ENCODE measurements at regions of chr11 and their contacts with region 1.

Region 1: GRCh38 chr11:62217191-62217748 is 8.8 kb downstream of the SCGB2A1 start:
- DNase-seq: no peak
- H3K4me3 Mint-ChIP-seq: no peak overlapping the region
- H3K27ac Mint-ChIP-seq: no peak overlapping the region
- H3K4me1 Mint-ChIP-seq: no peaks in the 10 kb centered on the region
- H3K27me3 Mint-ChIP-seq: peaks cover 8% of the 10 kb centered on the region

Region 2: DNA sequence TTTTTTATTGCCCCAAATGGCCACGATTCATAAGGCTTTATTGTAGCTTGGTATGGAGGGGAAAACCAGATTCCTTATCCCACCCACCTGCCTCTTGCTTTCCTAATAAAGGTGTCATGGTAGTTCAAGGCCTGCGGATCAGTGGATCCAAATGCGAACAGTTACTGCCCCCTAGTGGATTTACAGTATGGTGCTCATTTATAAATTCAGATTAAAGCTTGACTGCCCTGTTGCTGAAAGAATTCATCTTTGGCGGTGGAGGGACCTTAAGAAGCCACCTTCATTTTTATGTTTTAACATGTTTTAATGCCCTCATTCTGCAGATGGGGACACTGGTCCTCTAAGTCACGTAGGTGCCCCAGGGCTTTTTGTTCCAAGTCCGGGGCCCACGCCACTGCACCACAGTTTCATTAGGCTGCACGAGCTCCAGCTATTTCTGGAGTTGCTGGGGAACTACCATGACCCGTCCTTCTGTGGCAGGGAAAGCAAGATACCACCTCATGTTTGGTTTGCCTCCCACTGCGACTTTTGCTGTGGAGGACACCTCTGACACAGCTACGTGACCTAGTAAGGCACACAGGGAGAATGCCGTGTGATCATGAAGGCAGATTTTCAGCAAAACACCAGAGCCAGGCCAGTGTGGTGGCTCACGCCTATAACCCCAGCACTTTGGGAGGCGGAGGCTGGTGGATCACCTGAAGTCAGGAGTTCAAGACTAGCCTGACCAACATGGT is 109.1 kb before region 1 on chr11:
- intact Hi-C with region 1: no loop called
- DNase-seq: peak; percentile 12
- H3K4me3 Mint-ChIP-seq: no peak overlapping the region
- H3K27ac Mint-ChIP-seq: no peak overlapping the region
- H3K4me1 Mint-ChIP-seq: peaks cover 13% of the 10 kb centered on the region
- H3K27me3 Mint-ChIP-seq: peaks cover 4% of the 10 kb centered on the region

Region 3: GRCh38 chr11:62315431-62315830 is 98.2 kb after region 1 on chr11:
- intact Hi-C with region 1: loop called (anchors 1 kb)
- DNase-seq: no peak
- H3K4me3 Mint-ChIP-seq: no peak overlapping the region
- H3K27ac Mint-ChIP-seq: no peak overlapping the region
- H3K4me1 Mint-ChIP-seq: peaks cover 5% of the 10 kb centered on the region
- H3K27me3 Mint-ChIP-seq: peaks cover 16% of the 10 kb centered on the region

Region 4: DNA sequence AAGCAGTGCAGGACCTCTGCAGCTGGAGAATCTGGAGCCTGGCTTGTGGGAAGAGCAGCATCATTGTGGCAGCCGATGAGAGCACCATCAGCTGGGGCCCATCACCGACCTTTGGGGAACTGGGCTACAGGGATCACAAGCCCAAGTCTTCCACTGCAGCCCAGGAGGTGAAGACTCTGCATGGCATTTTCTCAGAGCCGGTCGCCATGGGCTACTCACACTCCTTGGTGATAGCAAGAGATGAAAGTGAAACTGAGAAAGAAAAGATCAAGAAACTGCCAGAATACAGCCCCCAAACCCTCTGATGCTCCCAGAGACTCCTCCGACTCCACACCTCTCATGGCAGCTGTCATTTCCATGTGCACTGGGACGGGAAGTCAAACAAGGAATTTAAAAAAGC is 155.6 kb after region 1 on chr11:
- intact Hi-C with region 1: loop called (anchors 1 kb)
- DNase-seq: no peak
- H3K4me3 Mint-ChIP-seq: no peak overlapping the region
- H3K27ac Mint-ChIP-seq: no peak overlapping the region
- H3K4me1 Mint-ChIP-seq: peaks cover 19% of the 10 kb centered on the region
- H3K27me3 Mint-ChIP-seq: no peaks in the 10 kb centered on the region

Measured in activated T-helper 1 cell treated with anti-CD3 and anti-CD28 coated beads, Interleukin-12 subunit alpha, Interleukin-12 subunit beta, Interleukin-2, Interleukin-4 antibody, amounts not matched to agents 30 ng/mL and 10 ng/mL and 1 ng/mL, durations not matched to agents 14 hours and 24 hours and 36 hours (primary cell).